GM12878 (cell line): ENCODE measurements at regions of chr20 and their contacts with region 1.

Region 1: GRCh38 chr20:47620808-47621805 is 119.4 kb downstream of the NCOA3 start:
- DNase-seq: peak; percentile 32
- ATAC-seq: peak; percentile 79
- H3K4me3 ChIP-seq: no peak overlapping the region
- H3K27ac ChIP-seq: peak overlapping the region; percentile 33
- H3K4me1 ChIP-seq: peaks cover 10% of the 10 kb centered on the region
- H3K27me3 ChIP-seq: no peaks in the 10 kb centered on the region
- CTCF ChIP-seq: peak; percentile 59 to 68 (median 60)
- EP300 ChIP-seq: no peak
- POLR2A ChIP-seq: no peak
- RAD21 ChIP-seq: peak; percentile 89

Region 2: GRCh38 chr20:46757754-46758678 is 863.1 kb before region 1 on chr20:
- CTCF ChIA-PET with region 1: no interaction called
- POLR2A ChIA-PET with region 1: no interaction called
- RAD21 ChIA-PET with region 1: no interaction called
- SMC1A ChIA-PET with region 1: no interaction called
- in situ Hi-C with region 1: no loop called
- intact Hi-C with region 1: loop called (anchors 10 kb)
- DNase-seq: peak; percentile 30
- ATAC-seq: peak; percentile 73
- H3K4me3 ChIP-seq: no peak overlapping the region
- H3K27ac ChIP-seq: no peak overlapping the region
- H3K4me1 ChIP-seq: no peaks in the 10 kb centered on the region
- H3K27me3 ChIP-seq: no peaks in the 10 kb centered on the region; a peak in 1 of 4 replicates
- CTCF ChIP-seq: peak; percentile 91 to 94 (median 91)
- EP300 ChIP-seq: no peak
- POLR2A ChIP-seq: no peak
- RAD21 ChIP-seq: peak; percentile 68

Region 3: GRCh38 chr20:47356526-47357295 is 264.4 kb before region 1 on chr20 and contains the start of gene ZMYND8:
- CTCF ChIA-PET with region 1: interaction called, 11 read pairs
- POLR2A ChIA-PET with region 1: no interaction called
- RAD21 ChIA-PET with region 1: no interaction called
- SMC1A ChIA-PET with region 1: interaction called, 6 read pairs
- in situ Hi-C with region 1: no loop called
- intact Hi-C with region 1: no loop called
- DNase-seq: peak; percentile 95
- ATAC-seq: peak; percentile 73
- H3K4me3 ChIP-seq: peak within 1 kb of the TSS; percentile 77
- H3K27ac ChIP-seq: peak within 1 kb of the TSS; percentile 99
- H3K4me1 ChIP-seq: peaks cover 46% of the 10 kb centered on the region
- H3K27me3 ChIP-seq: no peaks in the 10 kb centered on the region
- CTCF ChIP-seq: no peak
- EP300 ChIP-seq: no peak
- POLR2A ChIP-seq: no peak
- RAD21 ChIP-seq: no peak
- polyA plus RNA-seq, gene ZMYND8: 12.9 to 18.4 TPM

Region 4: DNA sequence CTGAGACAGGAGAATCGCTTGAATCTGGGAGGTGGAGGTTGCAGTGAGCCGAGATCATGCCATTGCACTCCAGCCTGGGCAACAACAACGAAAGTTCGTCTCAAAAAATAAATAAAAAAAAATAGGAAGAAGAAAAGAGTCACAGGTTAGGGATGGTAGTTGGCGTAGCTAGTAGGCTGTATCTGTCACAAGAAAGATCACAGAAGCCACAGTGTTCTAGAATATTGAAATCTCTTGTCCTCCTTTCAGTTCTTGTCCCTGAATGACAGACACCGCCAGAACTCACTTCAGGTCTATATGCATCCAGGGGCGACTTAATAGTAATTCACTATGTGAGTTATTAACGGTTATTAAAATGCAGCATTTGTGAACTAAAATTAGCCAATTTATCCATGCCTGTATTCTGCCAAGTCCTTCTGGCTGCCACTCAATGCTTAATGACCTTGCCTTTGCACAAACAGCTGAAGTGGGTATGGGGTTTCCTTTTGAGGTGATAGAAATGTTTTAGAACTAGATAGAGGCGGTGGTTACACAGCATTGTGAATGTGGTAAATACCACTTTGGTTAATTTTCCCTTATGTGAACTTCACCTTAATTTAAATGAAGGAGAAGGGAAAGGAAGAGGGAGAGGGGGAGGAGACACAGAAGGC is 223.3 kb before region 1 on chr20:
- CTCF ChIA-PET with region 1: interaction called, 4 read pairs
- POLR2A ChIA-PET with region 1: no interaction called
- RAD21 ChIA-PET with region 1: no interaction called
- SMC1A ChIA-PET with region 1: interaction called, 13 read pairs
- in situ Hi-C with region 1: loop called (anchors 5 kb)
- intact Hi-C with region 1: no loop called
- DNase-seq: no peak
- ATAC-seq: no peak
- H3K4me3 ChIP-seq: no peak overlapping the region
- H3K27ac ChIP-seq: no peak overlapping the region
- H3K4me1 ChIP-seq: peaks cover 1% of the 10 kb centered on the region
- H3K27me3 ChIP-seq: no peaks in the 10 kb centered on the region
- CTCF ChIP-seq: no peak
- EP300 ChIP-seq: no peak
- POLR2A ChIP-seq: no peak
- RAD21 ChIP-seq: no peak

Region 5: GRCh38 chr20:47576516-47577033 is 44.5 kb before region 1 on chr20:
- CTCF ChIA-PET with region 1: interaction called, 4 read pairs
- POLR2A ChIA-PET with region 1: no interaction called
- RAD21 ChIA-PET with region 1: interaction called, 6 read pairs
- SMC1A ChIA-PET with region 1: interaction called, 15 read pairs
- in situ Hi-C with region 1: no loop called
- intact Hi-C with region 1: no loop called
- DNase-seq: peak; percentile 46
- ATAC-seq: peak; percentile 85
- H3K4me3 ChIP-seq: peak overlapping the region; percentile 45
- H3K27ac ChIP-seq: peak overlapping the region; percentile 74
- H3K4me1 ChIP-seq: peaks cover 52% of the 10 kb centered on the region
- H3K27me3 ChIP-seq: no peaks in the 10 kb centered on the region
- CTCF ChIP-seq: no peak
- EP300 ChIP-seq: no peak
- POLR2A ChIP-seq: no peak
- RAD21 ChIP-seq: no peak

Region 6: GRCh38 chr20:47648943-47649342 is 27.8 kb after region 1 on chr20:
- CTCF ChIA-PET with region 1: no interaction called
- POLR2A ChIA-PET with region 1: no interaction called
- RAD21 ChIA-PET with region 1: no interaction called
- SMC1A ChIA-PET with region 1: no interaction called
- in situ Hi-C with region 1: no loop called
- intact Hi-C with region 1: no loop called
- DNase-seq: no peak
- ATAC-seq: no peak
- H3K4me3 ChIP-seq: no peak overlapping the region
- H3K27ac ChIP-seq: no peak overlapping the region
- H3K4me1 ChIP-seq: no peaks in the 10 kb centered on the region
- H3K27me3 ChIP-seq: no peaks in the 10 kb centered on the region
- CTCF ChIP-seq: no peak
- EP300 ChIP-seq: no peak
- POLR2A ChIP-seq: no peak
- RAD21 ChIP-seq: no peak